Panc1 (cell line): ENCODE measurements at regions of chr12 and their contacts with region 1.

Region 1: DNA sequence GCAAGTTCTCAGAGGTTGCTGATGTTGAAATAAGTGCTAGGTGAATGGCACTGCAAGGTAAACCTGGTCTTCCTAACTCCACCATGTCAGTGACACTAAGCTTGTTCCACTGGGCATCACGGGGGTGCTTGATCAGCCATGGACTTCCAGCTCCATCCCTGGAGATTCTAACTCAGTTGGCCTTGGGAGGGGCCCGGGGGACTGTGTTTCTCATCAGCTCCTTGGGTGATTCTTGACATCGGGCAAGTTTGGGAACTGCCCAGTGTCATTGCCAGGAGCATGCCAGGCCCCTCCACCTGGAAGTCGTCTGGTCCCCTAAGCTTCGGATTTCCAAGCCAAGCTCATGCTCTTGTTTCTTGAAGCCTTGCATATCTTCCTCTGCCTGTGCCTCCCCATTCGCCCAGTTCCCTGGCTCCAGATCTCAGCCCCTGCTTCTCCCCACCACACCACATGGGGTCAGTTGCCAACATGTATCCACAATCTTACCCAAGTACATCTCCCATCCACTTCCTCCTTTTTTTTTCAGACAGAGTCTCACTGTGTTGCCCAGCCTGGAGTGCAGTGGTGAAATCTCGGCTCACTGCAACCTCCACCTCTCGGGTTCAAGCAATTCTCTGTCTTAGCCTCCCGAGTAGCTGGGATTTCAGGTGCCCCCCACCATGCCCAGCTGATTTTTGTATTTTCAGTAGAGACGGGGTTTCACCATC is 30.7 kb upstream of the RFLNA start:
- DNase-seq: no peak
- ATAC-seq: no peak
- H3K4me3 ChIP-seq: no peak overlapping the region
- H3K27ac ChIP-seq: no peak overlapping the region
- H3K4me1 ChIP-seq: no peaks in the 10 kb centered on the region
- H3K27me3 ChIP-seq: peaks cover 6% of the 10 kb centered on the region; the same call in 1 of the 2 replicates
- CTCF ChIP-seq: no peak

Region 2: GRCh38 chr12:124044809-124045321 is 219.4 kb before region 1 on chr12:
- CTCF ChIA-PET with region 1: no interaction called
- POLR2A ChIA-PET with region 1: interaction called, 11 read pairs
- in situ Hi-C with region 1: no loop called
- intact Hi-C with region 1: no loop called
- DNase-seq: no peak
- ATAC-seq: no peak
- H3K4me3 ChIP-seq: no peak overlapping the region
- H3K27ac ChIP-seq: no peak overlapping the region
- H3K4me1 ChIP-seq: no peaks in the 10 kb centered on the region
- H3K27me3 ChIP-seq: no peaks in the 10 kb centered on the region
- CTCF ChIP-seq: no peak